Ascending aorta (tissue), 2 donors: ENCODE measurements at regions of chr9 and their contacts with region 1.

Region 1: GRCh38 chr9:88578121-88579054 is 43.4 kb downstream of the NXNL2 start:
- DNase-seq: peak in 1 of 2 donors; percentile 86
- H3K4me3 ChIP-seq: no peak overlapping the region
- H3K27ac ChIP-seq: no peak overlapping the region
- H3K4me1 ChIP-seq: no peaks in the 10 kb centered on the region
- H3K27me3 ChIP-seq: no peaks in the 10 kb centered on the region
- CTCF ChIP-seq: peak; percentile 84 to 99 (median 98)

Region 2: GRCh38 chr9:88106491-88106890 is 471.9 kb before region 1 on chr9:
- intact Hi-C with region 1: loop called (anchors 2 kb)
- DNase-seq: no peak
- H3K4me3 ChIP-seq: no peak overlapping the region
- H3K27ac ChIP-seq: no peak overlapping the region
- H3K4me1 ChIP-seq: no peaks in the 10 kb centered on the region
- H3K27me3 ChIP-seq: no peaks in the 10 kb centered on the region
- CTCF ChIP-seq: peak in 2 of 3 experiments; percentile 40 to 44

Region 3: GRCh38 chr9:88173378-88173999 is 404.9 kb before region 1 on chr9:
- intact Hi-C with region 1: loop called (anchors 10 kb)
- DNase-seq: no peak
- H3K4me3 ChIP-seq: no peak overlapping the region
- H3K27ac ChIP-seq: no peak overlapping the region
- H3K4me1 ChIP-seq: no peaks in the 10 kb centered on the region
- H3K27me3 ChIP-seq: no peaks in the 10 kb centered on the region
- CTCF ChIP-seq: peak; percentile 41 to 67 (median 48)

Region 4: GRCh38 chr9:88593537-88594185 is 15.3 kb after region 1 on chr9:
- intact Hi-C with region 1: no loop called
- DNase-seq: peak in 1 of 2 donors; percentile 80
- H3K4me3 ChIP-seq: no peak overlapping the region
- H3K27ac ChIP-seq: no peak overlapping the region
- H3K4me1 ChIP-seq: no peaks in the 10 kb centered on the region
- H3K27me3 ChIP-seq: no peaks in the 10 kb centered on the region
- CTCF ChIP-seq: peak; percentile 54 to 75 (median 68)